HEK293 (cell line): ENCODE measurements at regions of chr5 and their contacts with region 1.

Region 1: GRCh38 chr5:139517683-139518564 is 35.4 kb upstream of the STING1 start:
- H3K4me3 ChIP-seq: peak overlapping the region; percentile 37
- H3K27ac ChIP-seq: peak overlapping the region; percentile 48; the same call in 1 of the 2 replicates
- H3K4me1 ChIP-seq: no peaks in the 10 kb centered on the region
- CTCF ChIP-seq: peak; percentile 100

Region 2: GRCh38 chr5:139482050-139482889 is 35.7 kb before region 1 on chr5 and contains the start of gene STING1:
- CTCF ChIA-PET with region 1: interaction called, 24 read pairs
- POLR2A ChIA-PET with region 1: interaction called, 5 read pairs
- H3K4me3 ChIP-seq: peak within 1 kb of the TSS; percentile 14; the same call in 1 of the 2 replicates
- H3K27ac ChIP-seq: peak within 1 kb of the TSS; percentile 93
- H3K4me1 ChIP-seq: peaks cover 15% of the 10 kb centered on the region
- CTCF ChIP-seq: no peak

Region 3: GRCh38 chr5:139651853-139652787 is 134.2 kb after region 1 on chr5:
- CTCF ChIA-PET with region 1: no interaction called
- POLR2A ChIA-PET with region 1: no interaction called
- H3K4me3 ChIP-seq: no peak overlapping the region
- H3K27ac ChIP-seq: no peak overlapping the region; the same call in 1 of the 2 replicates
- H3K4me1 ChIP-seq: peaks cover 28% of the 10 kb centered on the region
- CTCF ChIP-seq: no peak